Activated CD4-positive, alpha-beta memory T cell treated with anti-CD3 and anti-CD28 coated beads for 36 hours (primary cell): ENCODE measurements at regions of chr12 and their contacts with region 1.

Region 1: DNA sequence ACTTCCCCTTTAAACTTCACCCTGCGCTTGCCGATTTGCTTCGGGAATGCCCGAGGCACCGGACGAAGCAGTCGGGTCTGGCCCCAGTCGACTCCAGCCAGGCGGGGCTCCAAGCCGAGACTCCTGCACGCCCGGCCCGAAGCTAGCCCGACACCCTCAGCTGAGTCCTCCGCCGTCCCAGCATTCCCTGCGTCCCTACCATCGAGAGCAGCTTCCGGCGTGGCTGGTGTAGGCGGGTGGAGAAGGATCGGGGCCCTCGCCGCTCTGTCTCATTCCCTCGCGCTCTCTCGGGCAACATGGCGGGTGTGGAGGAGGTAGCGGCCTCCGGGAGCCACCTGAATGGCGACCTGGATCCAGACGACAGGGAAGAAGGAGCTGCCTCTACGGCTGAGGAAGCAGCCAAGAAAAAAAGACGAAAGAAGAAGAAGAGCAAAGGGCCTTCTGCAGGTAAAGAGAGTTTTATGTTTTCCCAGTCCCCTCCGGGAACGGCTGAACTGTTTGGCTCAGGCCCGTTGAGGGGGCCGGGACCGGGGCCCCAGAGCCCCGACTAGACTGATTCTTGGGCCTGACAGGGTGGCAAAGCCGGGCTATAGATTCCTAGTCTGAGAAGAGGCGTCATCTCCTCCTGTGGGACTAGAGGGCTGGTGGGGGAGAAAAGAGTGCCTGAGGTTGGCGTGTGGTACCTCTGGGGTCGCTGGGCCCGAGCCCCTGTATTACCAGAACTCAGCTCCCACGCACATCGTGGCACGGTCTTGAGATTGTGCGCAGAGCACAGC is at the start of gene METAP2:
- DNase-seq: peak; percentile 97
- H3K4me3 Mint-ChIP-seq: peak within 1 kb of the TSS; percentile 100
- H3K27ac Mint-ChIP-seq: peak within 1 kb of the TSS; percentile 97
- H3K4me1 Mint-ChIP-seq: peaks cover 37% of the 10 kb centered on the region
- H3K27me3 Mint-ChIP-seq: no peaks in the 10 kb centered on the region
- total RNA-seq, gene METAP2: 107 to 108 TPM

Region 2: DNA sequence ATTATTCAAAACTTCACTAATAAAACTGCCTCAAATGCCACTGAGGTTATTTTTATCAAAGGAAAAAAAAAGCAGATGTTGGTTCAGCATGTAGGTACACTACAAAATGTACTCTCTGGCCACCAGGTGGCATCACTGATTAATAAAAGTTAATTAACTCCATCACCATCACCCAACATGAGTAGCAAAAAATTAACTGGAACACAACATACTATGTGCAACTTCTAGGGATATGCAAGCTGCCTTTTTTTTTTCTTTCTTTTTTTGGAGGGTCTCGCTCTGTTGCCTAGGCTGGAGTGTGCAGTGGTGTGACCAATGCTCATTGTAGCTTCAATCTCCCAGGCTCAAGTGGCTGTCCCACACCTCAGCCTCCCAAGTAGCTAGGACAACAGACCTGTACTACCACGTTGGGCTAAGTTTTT is 356.9 kb before region 1 on chr12:
- CTCF ChIA-PET with region 1: interaction called, 14 read pairs
- POLR2A ChIA-PET with region 1: no interaction called
- intact Hi-C with region 1: loop called (anchors 5 kb)
- DNase-seq: peak; percentile 53
- H3K4me3 Mint-ChIP-seq: no peak overlapping the region
- H3K27ac Mint-ChIP-seq: no peak overlapping the region
- H3K4me1 Mint-ChIP-seq: peaks cover 5% of the 10 kb centered on the region
- H3K27me3 Mint-ChIP-seq: no peaks in the 10 kb centered on the region

Region 3: DNA sequence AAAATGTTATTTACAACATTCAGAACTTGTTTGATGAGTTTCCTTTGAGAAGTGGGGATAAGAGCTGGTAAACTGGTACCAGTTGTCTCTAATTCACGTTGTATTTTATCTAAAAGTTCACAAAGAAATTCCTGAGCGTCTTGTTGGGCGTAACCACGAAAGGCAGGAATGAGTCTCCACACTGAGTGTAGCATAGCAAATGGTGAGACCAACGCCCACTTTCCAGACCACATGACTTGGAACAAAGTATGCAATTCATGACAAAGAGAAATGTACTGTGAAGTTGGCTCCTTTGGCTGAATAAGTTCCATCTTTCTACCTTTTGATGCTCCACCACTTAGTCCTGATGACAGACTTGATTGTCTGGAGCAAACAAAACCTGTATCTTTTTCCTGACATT is 58.8 kb after region 1 on chr12:
- CTCF ChIA-PET with region 1: interaction called, 14 read pairs
- POLR2A ChIA-PET with region 1: interaction called, 3 read pairs
- intact Hi-C with region 1: no loop called
- DNase-seq: peak; percentile 33
- H3K4me3 Mint-ChIP-seq: no peak overlapping the region
- H3K27ac Mint-ChIP-seq: no peak overlapping the region
- H3K4me1 Mint-ChIP-seq: peaks cover 8% of the 10 kb centered on the region
- H3K27me3 Mint-ChIP-seq: no peaks in the 10 kb centered on the region

Region 4: GRCh38 chr12:95858479-95859343 is 384.6 kb after region 1 on chr12 and contains the start of gene SNRPF:
- CTCF ChIA-PET with region 1: no interaction called
- POLR2A ChIA-PET with region 1: no interaction called
- intact Hi-C with region 1: loop called (anchors 1 kb)
- DNase-seq: peak; percentile 97
- H3K4me3 Mint-ChIP-seq: no peak within 1 kb of the TSS
- H3K27ac Mint-ChIP-seq: no peak within 1 kb of the TSS
- H3K4me1 Mint-ChIP-seq: peaks cover 38% of the 10 kb centered on the region
- H3K27me3 Mint-ChIP-seq: peaks cover 5% of the 10 kb centered on the region
- total RNA-seq, gene SNRPF: 45.4 to 46.0 TPM